WTC11 (cell line): ENCODE measurements at regions of chr11 and their contacts with region 1.

Region 1: GRCh38 chr11:96228473-96228891 is 114.5 kb downstream of the MAML2 start:
- DNase-seq: no peak
- ATAC-seq: no peak
- H3K4me3 Mint-ChIP-seq: no peak overlapping the region
- H3K27ac Mint-ChIP-seq: no peak overlapping the region
- H3K4me1 Mint-ChIP-seq: peaks cover 22% of the 10 kb centered on the region
- H3K27me3 Mint-ChIP-seq: no peaks in the 10 kb centered on the region
- CTCF ChIP-seq: no peak

Region 2: GRCh38 chr11:96279018-96279895 is 50.8 kb after region 1 on chr11:
- CTCF ChIA-PET with region 1: no interaction called
- POLR2A ChIA-PET with region 1: interaction called, 13 read pairs
- DNase-seq: no peak
- ATAC-seq: no peak
- H3K4me3 Mint-ChIP-seq: no peak overlapping the region
- H3K27ac Mint-ChIP-seq: no peak overlapping the region
- H3K4me1 Mint-ChIP-seq: peaks cover 45% of the 10 kb centered on the region
- H3K27me3 Mint-ChIP-seq: no peaks in the 10 kb centered on the region
- CTCF ChIP-seq: no peak